ENCODE measurements at regions of chr17 and their contacts with region 1.

Region 1: DNA sequence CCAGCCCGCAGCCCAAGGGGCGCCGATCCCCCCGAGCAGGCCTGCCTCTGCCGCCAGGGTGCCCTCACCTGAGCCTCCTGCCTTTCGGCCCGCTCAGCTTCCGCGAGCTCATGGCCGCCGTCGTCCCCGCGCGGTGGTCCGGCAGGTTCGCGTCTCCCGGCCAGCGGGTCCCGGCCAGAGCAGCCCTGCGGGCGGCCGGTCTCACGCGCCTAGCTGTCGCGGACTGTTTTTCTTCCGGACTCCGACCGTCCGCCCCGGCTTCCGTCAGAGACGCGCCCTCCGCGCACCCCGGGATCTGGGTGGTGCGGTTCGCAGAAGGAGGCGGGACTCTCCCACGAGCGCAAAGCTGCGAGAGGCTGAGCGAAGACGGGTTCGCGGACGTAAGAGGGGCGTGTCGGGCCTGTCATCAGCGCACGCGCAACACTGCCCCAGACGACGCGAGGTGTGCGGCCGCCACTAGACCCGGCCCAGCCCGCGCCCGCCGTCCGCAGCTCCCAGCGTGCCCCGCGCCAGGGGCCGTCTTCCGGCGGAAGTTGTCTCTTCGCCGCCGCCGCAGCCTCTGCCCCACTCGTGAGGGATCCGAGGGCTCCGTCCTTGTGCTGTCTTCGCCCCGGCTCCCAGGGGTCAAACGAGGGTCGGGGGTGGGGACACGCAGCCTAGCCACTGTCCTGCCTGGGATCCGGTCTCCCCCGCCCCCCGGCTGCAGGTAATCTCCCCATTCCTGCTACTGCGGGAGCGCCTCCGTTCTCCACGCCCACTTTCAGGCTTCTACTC is at the start of gene INPP5K:
- DNase-seq: peak; percentile 98
- ATAC-seq: peak; percentile 97
- H3K4me3 ChIP-seq: peak within 1 kb of the TSS; percentile 85
- H3K27ac ChIP-seq: peak within 1 kb of the TSS; percentile 92
- H3K4me1 ChIP-seq: peaks cover 3% of the 10 kb centered on the region
- H3K27me3 ChIP-seq: no peaks in the 10 kb centered on the region
- CTCF ChIP-seq: no peak
- POLR2A ChIP-seq: peak; percentile 82
- RAD21 ChIP-seq: 0 out of 2 replicates have a peak, but pooled peaks have one; percentile 3
- total RNA-seq, gene INPP5K: 16.4 and 17.4 TPM in 2 replicates

Region 2: DNA sequence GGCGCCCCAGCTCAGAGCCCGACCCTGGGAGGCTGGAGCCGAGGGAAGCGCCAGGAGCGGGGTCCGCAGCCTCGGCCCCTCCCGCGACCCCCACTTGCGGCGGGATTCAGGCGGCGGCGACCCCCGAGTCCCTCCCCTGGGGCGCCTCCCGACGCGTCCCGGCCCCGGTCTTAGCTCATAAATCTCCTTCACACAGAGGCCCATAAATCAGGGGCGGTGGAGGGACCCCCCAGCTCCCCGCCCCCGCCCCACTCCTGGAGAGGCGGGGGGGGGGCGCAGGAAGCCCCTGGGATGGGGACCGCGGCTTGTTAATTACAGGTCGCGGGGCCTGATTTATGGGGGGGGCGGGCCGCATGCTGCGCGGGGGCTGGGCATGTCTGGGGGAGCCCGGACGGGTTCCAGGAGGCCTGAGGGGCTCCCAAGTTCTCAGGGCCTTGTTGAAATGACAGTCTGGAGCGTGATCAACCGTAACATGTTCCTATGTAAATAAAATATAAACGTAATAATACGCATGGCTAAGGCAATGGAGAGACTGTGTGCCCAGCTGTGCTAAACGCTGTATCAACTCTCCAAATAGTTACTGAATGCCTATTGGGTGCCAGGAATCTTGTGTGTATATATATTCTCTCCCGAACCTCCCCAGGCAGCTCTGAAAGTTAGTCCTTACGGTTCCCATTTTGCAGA is 256.3 kb before region 1 on chr17:
- CTCF ChIA-PET with region 1: interaction called, 3 read pairs
- POLR2A ChIA-PET with region 1: no interaction called
- dilution Hi-C with region 1: no loop called
- in situ Hi-C with region 1: no loop called
- intact Hi-C with region 1: loop called (anchors 1 kb)
- DNase-seq: no peak
- ATAC-seq: peak; percentile 40
- H3K4me3 ChIP-seq: peak overlapping the region; percentile 79
- H3K27ac ChIP-seq: no peak overlapping the region
- H3K4me1 ChIP-seq: no peaks in the 10 kb centered on the region
- H3K27me3 ChIP-seq: peaks cover 5% of the 10 kb centered on the region
- CTCF ChIP-seq: no peak
- POLR2A ChIP-seq: no peak
- RAD21 ChIP-seq: no peak

Region 3: DNA sequence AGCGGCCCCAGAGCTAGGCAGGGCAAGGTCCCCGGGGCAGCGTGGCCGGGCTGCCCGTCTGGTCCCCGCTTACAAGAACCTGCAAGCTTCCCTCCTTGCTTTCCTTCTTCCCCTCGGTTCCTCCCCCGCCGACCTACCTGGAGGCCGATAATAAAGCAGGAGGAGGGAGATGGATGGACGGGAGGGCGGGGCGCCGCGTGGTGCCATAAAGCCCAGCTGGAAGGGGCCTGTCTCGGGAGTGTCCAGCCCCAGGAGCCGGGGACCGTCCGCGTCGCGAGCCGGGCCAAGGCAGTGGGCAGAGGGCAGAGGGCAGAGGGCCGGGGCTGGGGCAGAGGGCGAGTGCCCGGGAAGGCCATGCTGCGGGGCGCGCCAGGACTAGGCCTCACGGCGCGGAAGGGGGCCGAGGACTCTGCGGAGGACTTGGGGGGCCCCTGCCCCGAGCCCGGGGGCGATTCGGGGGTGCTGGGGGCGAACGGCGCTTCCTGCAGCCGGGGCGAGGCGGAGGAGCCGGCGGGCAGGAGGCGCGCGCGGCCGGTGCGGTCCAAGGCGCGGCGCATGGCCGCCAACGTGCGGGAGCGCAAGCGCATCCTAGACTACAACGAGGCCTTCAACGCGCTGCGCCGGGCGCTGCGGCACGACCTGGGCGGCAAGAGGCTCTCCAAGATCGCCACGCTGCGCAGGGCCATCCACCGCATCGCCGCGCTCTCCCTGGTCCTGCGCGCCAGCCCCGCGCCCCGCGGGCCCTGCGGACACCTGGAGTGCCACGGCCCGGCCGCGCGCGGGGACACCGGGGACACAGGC is 246.2 kb before region 1 on chr17 and contains the start of gene BHLHA9:
- CTCF ChIA-PET with region 1: no interaction called
- POLR2A ChIA-PET with region 1: no interaction called
- dilution Hi-C with region 1: no loop called
- in situ Hi-C with region 1: loop called (anchors 5 kb)
- intact Hi-C with region 1: no loop called
- DNase-seq: no peak
- ATAC-seq: no peak
- H3K4me3 ChIP-seq: no peak within 1 kb of the TSS
- H3K27ac ChIP-seq: no peak within 1 kb of the TSS
- H3K4me1 ChIP-seq: peaks cover 3% of the 10 kb centered on the region
- H3K27me3 ChIP-seq: peaks cover 35% of the 10 kb centered on the region
- CTCF ChIP-seq: no peak
- POLR2A ChIP-seq: no peak
- RAD21 ChIP-seq: no peak
- total RNA-seq, gene BHLHA9: not detected in 2 replicates

Region 4: GRCh38 chr17:1275962-1276736 is 240.4 kb before region 1 on chr17:
- CTCF ChIA-PET with region 1: no interaction called
- POLR2A ChIA-PET with region 1: no interaction called
- dilution Hi-C with region 1: no loop called
- in situ Hi-C with region 1: loop called (anchors 5 kb)
- intact Hi-C with region 1: loop called (anchors 1 kb)
- DNase-seq: peak; percentile 27
- ATAC-seq: peak; percentile 90
- H3K4me3 ChIP-seq: no peak overlapping the region
- H3K27ac ChIP-seq: no peak overlapping the region
- H3K4me1 ChIP-seq: no peaks in the 10 kb centered on the region
- H3K27me3 ChIP-seq: peaks cover 48% of the 10 kb centered on the region
- CTCF ChIP-seq: peak; percentile 81
- POLR2A ChIP-seq: no peak
- RAD21 ChIP-seq: peak; percentile 88

Region 5: GRCh38 chr17:1365445-1366039 is 151.0 kb before region 1 on chr17:
- CTCF ChIA-PET with region 1: interaction called, 6 read pairs
- POLR2A ChIA-PET with region 1: no interaction called
- dilution Hi-C with region 1: no loop called
- in situ Hi-C with region 1: loop called (anchors 10 kb)
- intact Hi-C with region 1: loop called (anchors 1 kb)
- DNase-seq: peak; percentile 81
- ATAC-seq: peak; percentile 76
- H3K4me3 ChIP-seq: no peak overlapping the region
- H3K27ac ChIP-seq: peak overlapping the region; percentile 11; the same call in 1 of the 2 replicates
- H3K4me1 ChIP-seq: peaks cover 18% of the 10 kb centered on the region
- H3K27me3 ChIP-seq: no peaks in the 10 kb centered on the region
- CTCF ChIP-seq: peak; percentile 85
- POLR2A ChIP-seq: no peak
- RAD21 ChIP-seq: peak; percentile 82

Region 6: DNA sequence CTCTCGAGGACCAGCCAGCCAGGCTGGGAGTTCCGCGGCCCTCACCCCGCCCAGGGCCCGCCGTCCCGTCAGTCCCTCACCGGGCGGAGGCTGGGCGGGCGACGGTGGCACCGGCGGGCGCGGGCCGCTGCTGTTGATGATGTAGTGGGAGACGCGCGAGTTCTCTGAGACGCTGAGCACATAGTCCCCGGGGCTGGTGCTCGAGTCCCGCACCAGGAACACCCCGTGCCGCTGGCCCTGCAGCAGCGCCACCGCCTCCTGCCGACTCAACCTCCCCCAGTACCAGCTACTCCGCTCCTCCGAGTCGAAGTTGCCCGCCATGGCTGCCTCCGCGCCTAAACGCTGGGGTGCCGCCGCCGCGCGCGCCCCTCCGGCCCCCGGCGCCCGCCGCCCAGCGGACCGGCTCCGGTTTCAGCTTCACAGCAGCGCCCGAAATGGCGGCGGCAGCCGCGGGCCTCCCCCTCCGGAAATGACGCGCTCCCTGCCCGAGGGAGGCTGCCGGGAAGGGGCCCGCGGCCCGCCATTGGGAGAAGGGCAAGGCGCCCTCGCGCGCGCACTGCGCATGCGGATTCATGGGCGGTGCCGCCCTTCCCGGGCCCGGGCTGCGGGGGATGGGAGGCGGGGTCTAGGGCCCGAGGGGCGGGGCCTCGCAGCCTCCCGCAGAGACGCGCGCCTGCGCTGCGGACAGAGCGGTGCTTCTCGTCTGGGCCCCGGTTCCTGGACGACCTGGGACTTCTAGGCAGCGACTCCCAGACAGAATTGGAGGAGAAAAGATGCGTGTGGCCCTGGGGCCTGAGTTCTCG is 60.6 kb before region 1 on chr17 and contains the start of gene CRK:
- CTCF ChIA-PET with region 1: no interaction called
- POLR2A ChIA-PET with region 1: no interaction called
- dilution Hi-C with region 1: no loop called
- in situ Hi-C with region 1: no loop called
- intact Hi-C with region 1: loop called (anchors 2 kb)
- DNase-seq: peak; percentile 93
- ATAC-seq: peak; percentile 94
- H3K4me3 ChIP-seq: peak within 1 kb of the TSS; percentile 75
- H3K27ac ChIP-seq: peak within 1 kb of the TSS; percentile 76
- H3K4me1 ChIP-seq: peaks cover 7% of the 10 kb centered on the region
- H3K27me3 ChIP-seq: no peaks in the 10 kb centered on the region
- CTCF ChIP-seq: peak; percentile 10; the same call in 1 of the 2 replicates
- POLR2A ChIP-seq: peak; percentile 94
- RAD21 ChIP-seq: no peak
- total RNA-seq, gene CRK: 100 and 123 TPM in 2 replicates

Region 7: DNA sequence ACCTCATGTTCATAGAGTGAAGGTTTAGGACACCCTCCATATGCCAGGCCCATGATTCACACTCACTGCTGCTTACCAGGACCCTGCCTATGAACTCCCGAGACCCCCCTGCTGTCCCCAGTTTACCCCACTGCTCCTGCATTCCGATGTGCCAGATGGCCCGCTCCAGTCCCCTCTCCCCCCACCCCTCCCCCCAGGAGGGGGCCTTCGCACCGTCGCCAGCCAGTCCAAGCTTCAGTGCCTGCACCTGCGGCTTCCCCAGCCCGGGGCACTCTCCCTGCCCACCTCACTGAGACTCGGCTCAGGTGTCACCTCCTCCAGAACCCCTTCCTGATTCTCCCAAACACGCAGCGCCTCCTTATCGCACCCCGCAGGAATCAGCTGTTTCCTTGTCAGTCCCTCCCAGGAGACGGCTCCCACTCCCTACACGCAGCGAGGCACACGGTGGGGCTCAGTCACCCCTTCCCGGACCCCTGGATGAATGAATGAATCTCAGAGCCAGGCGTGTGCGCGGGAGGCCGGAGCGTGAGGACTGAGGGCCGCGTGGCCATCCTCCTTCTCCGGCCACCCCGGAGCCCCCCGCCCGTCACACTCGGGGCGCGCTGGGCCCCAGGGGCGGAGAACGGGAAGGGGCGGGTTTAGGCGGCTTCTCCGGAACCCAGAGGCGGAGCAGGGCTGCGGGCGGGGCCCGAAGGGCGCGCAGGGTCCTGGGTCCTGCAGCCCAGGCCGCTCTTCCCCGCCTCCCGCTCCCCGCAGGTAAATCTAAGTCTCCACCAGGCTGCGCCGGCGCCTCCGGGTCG is 25.7 kb before region 1 on chr17:
- CTCF ChIA-PET with region 1: interaction called, 3 read pairs
- POLR2A ChIA-PET with region 1: no interaction called
- dilution Hi-C with region 1: no loop called
- in situ Hi-C with region 1: no loop called
- intact Hi-C with region 1: loop called (anchors 1 kb)
- DNase-seq: no peak
- ATAC-seq: peak; percentile 68
- H3K4me3 ChIP-seq: peak overlapping the region; percentile 99
- H3K27ac ChIP-seq: peak overlapping the region; percentile 92
- H3K4me1 ChIP-seq: peaks cover 23% of the 10 kb centered on the region
- H3K27me3 ChIP-seq: no peaks in the 10 kb centered on the region
- CTCF ChIP-seq: no peak
- POLR2A ChIP-seq: no peak
- RAD21 ChIP-seq: no peak

Region 8: GRCh38 chr17:1590031-1590748 is 73.6 kb after region 1 on chr17:
- CTCF ChIA-PET with region 1: no interaction called
- POLR2A ChIA-PET with region 1: no interaction called
- dilution Hi-C with region 1: no loop called
- in situ Hi-C with region 1: no loop called
- intact Hi-C with region 1: no loop called
- DNase-seq: peak; percentile 90
- ATAC-seq: peak; percentile 97
- H3K4me3 ChIP-seq: no peak overlapping the region
- H3K27ac ChIP-seq: peak overlapping the region; percentile 87
- H3K4me1 ChIP-seq: peaks cover 17% of the 10 kb centered on the region
- H3K27me3 ChIP-seq: no peaks in the 10 kb centered on the region
- CTCF ChIP-seq: no peak
- POLR2A ChIP-seq: no peak
- RAD21 ChIP-seq: no peak